Spleen (tissue), 13 donors: ENCODE measurements at regions of chr5 and their contacts with region 1.

Region 1: GRCh38 chr5:38809388-38810359 is 36.1 kb upstream of the OSMR start:
- DNase-seq: peak; percentile 82
- H3K4me3 ChIP-seq: no peak overlapping the region
- H3K27ac ChIP-seq: peak overlapping the region; percentile 35 to 82 (median 60)
- H3K4me1 ChIP-seq: peaks cover 5 to 34% (median 23%) of the 10 kb centered on the region in 6 donors
- H3K27me3 ChIP-seq: peaks cover 0 to 26% (median 0%) of the 10 kb centered on the region in 7 donors
- CTCF ChIP-seq: peak; percentile 21 to 83 (median 67)
- POLR2A ChIP-seq: no peak

Region 2: DNA sequence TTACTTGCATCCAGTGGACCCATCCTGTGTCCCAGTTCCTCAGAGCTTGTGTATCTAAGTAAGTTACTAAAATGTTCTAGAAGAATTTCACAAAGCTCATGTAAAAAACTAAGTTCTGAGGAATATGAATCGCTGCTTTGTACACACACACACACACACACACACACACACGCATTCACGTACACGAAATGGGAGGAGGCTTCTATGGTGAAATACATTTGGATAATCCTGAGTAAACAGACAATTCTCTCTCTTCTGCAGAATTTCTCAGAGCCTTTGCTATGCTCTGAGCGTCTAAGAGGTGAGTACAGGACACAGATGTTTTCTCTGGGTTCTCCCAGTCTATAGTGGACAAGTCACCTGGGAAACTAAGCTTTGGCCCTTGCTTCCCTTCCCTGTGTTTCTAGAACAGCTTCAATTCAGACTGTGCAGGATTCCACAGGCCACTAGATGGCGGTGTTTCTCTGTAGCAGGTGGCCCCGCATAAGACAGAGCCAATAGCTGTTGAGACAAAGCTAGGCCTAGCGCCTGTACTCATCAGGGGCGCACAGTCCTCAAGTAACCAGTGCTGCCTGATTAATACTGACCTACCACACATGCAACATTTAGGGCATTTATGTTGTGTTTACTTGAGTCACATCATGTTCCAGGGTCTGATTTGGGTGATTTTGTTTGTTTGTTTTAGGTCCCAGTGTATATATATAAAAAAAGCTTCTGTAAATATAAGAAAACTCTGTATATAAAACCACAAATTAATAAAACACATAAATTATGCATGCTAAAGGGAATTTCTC is 368.0 kb before region 1 on chr5:
- intact Hi-C with region 1: loop called (anchors 5 kb)
- DNase-seq: peak; percentile 90
- H3K4me3 ChIP-seq: no peak overlapping the region
- H3K27ac ChIP-seq: no peak overlapping the region
- H3K4me1 ChIP-seq: peaks cover 0 to 22% (median 2%) of the 10 kb centered on the region in 6 donors
- H3K27me3 ChIP-seq: peaks cover 0 to 94% (median 6%) of the 10 kb centered on the region in 7 donors
- CTCF ChIP-seq: peak; percentile 70 to 93 (median 90)
- POLR2A ChIP-seq: no peak

Region 3: GRCh38 chr5:38556599-38557305 is 252.9 kb before region 1 on chr5 and contains the start of gene LIFR:
- intact Hi-C with region 1: loop called (anchors 10 kb)
- DNase-seq: peak; percentile 85
- H3K4me3 ChIP-seq: peak within 1 kb of the TSS; percentile 51 to 78 (median 56)
- H3K27ac ChIP-seq: peak within 1 kb of the TSS; percentile 61 to 96 (median 92)
- H3K4me1 ChIP-seq: peaks cover 0 to 37% (median 23%) of the 10 kb centered on the region in 6 donors
- H3K27me3 ChIP-seq: peaks cover 0 to 75% (median 18%) of the 10 kb centered on the region in 7 donors
- CTCF ChIP-seq: no peak
- POLR2A ChIP-seq: peak in 2 of 3 donors; percentile 24 to 32
- total RNA-seq, gene LIFR: 73.0 to 191 (median 156) TPM